Dorsolateral prefrontal cortex (tissue), 120 donors: ENCODE measurements at regions of chr9 and their contacts with region 1.

Region 1: GRCh38 chr9:114587385-114588202 is at the start of gene ATP6V1G1:
- DNase-seq: peak; percentile 94 to 98 (median 96)
- H3K4me3 ChIP-seq: peak within 1 kb of the TSS; percentile 66 to 100 (median 96)
- H3K27ac ChIP-seq: peak within 1 kb of the TSS; percentile 66 to 97 (median 93)
- H3K27me3 ChIP-seq: no peaks in the 10 kb centered on the region
- CTCF ChIP-seq: peak in 47 of 56 donors; percentile 1 to 68 (median 42)
- total RNA-seq, gene ATP6V1G1: 40.7 to 117 (median 67.2) TPM

Region 2: GRCh38 chr9:114405294-114406034 is 182.1 kb before region 1 on chr9:
- intact Hi-C with region 1: loop called in 1 of 2 experiments (anchors 10 kb)
- DNase-seq: peak; percentile 50 to 89 (median 82)
- H3K4me3 ChIP-seq: no peak overlapping the region
- H3K27ac ChIP-seq: peak overlapping the region in 55 of 59 donors; percentile 7 to 87 (median 67)
- H3K27me3 ChIP-seq: no peaks in the 10 kb centered on the region
- CTCF ChIP-seq: peak; percentile 52 to 93 (median 82)

Region 3: DNA sequence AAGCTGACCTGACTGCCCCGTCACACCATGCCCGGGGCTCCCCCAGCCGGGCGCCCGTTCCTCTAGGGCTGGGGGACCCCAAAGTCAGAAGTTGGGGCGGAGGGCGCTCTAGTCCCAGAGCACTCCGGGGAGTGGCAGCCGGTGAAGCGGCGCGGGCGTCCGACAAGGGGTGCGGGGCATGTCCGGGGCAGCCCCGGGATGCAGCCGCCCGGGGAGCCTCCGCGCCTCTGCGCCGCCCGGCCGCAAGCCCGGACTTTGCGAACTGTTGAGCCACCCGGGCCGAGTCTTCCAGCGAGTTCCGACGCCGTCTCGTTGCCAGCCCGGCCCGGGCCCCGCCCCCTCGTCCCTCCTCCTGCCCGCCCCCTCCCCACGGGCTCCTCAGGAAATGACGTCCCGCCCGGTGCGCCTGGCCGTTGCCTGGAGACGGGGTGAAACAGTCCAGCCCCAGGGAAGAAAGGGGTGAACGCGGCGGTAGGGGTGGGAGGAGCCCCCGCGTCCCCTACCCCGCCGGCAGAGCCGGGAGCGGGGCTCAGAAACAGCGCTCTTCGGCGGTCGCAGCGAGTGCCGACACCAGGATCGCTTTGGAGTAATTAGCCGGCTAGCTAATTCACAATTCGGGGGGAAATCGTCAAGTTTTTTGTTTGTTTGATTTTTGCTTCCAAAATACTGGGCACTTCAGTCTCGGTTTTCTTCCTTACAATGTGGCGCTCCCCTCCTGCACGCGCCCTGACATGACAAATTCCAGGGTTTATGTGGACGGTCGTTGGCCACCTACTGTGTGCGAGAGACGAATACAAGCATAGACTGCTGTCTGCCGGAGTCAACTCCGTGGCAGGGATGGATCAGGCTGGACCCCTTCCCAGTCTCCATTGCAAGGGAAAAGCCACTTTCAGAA is 82.2 kb before region 1 on chr9 and contains the start of gene WHRN:
- intact Hi-C with region 1: loop called (anchors 5 kb)
- DNase-seq: peak; percentile 67 to 94 (median 90)
- H3K4me3 ChIP-seq: peak within 1 kb of the TSS; percentile 43 to 87 (median 73)
- H3K27ac ChIP-seq: peak within 1 kb of the TSS in 56 of 59 donors; percentile 45 to 98 (median 92)
- H3K27me3 ChIP-seq: peaks cover 0 to 26% (median 0%) of the 10 kb centered on the region in 45 donors
- CTCF ChIP-seq: peak in 15 of 56 donors; percentile 4 to 35 (median 15)
- total RNA-seq, gene WHRN: 8.2 to 129 (median 33.9) TPM

Region 4: GRCh38 chr9:114611516-114612271 is 24.1 kb after region 1 on chr9:
- intact Hi-C with region 1: loop called in 1 of 2 experiments (anchors 2 kb)
- DNase-seq: peak in 8 of 10 donors; percentile 36 to 64 (median 42)
- H3K4me3 ChIP-seq: peak overlapping the region; percentile 53 to 88 (median 76)
- H3K27ac ChIP-seq: peak overlapping the region in 58 of 59 donors; percentile 60 to 97 (median 90)
- H3K27me3 ChIP-seq: no peaks in the 10 kb centered on the region
- CTCF ChIP-seq: no peak

Region 5: GRCh38 chr9:115289757-115290208 is 702.2 kb after region 1 on chr9:
- intact Hi-C with region 1: no loop called
- DNase-seq: no peak
- H3K4me3 ChIP-seq: no peak overlapping the region
- H3K27ac ChIP-seq: no peak overlapping the region
- H3K27me3 ChIP-seq: no peaks in the 10 kb centered on the region
- CTCF ChIP-seq: no peak